IMR-90 (cell line): ENCODE measurements at regions of chr18 and their contacts with region 1.

Region 1: GRCh38 chr18:13530879-13531387 is 195.4 kb downstream of the FAM210A start:
- DNase-seq: peak; percentile 8
- ATAC-seq: peak; percentile 86
- H3K4me3 ChIP-seq: no peak overlapping the region
- H3K27ac ChIP-seq: no peak overlapping the region
- H3K4me1 ChIP-seq: no peaks in the 10 kb centered on the region
- H3K27me3 ChIP-seq: peaks cover 5% of the 10 kb centered on the region; the same call in 1 of the 2 replicates
- CTCF ChIP-seq: peak; percentile 42
- POLR2A ChIP-seq: no peak
- RAD21 ChIP-seq: peak; percentile 47

Region 2: DNA sequence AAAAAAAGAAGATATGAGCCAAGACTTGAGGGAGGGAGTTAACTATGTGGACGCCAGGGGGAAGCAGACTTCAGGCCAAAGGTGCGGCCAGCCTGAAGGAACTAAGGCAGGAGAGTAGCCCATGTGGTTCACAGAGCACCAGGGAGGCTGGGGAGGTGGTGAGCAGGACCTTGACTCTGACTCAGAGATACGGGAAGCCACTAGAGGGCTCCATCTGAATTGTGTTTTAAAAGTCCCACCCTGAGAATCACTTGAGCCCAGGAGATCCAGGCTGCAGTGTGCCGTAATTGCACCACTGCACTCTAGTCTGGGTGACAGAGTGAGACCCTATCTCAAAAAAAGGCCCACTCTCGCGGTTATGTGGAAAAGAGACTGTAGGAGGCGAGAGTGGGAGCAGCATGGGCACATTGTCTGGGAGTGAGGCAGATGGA is 527.5 kb before region 1 on chr18:
- CTCF ChIA-PET with region 1: no interaction called
- POLR2A ChIA-PET with region 1: no interaction called
- dilution Hi-C with region 1: no loop called
- in situ Hi-C with region 1: no loop called
- intact Hi-C with region 1: loop called (anchors 10 kb)
- DNase-seq: peak; percentile 80
- ATAC-seq: peak; percentile 98
- H3K4me3 ChIP-seq: no peak overlapping the region
- H3K27ac ChIP-seq: no peak overlapping the region
- H3K4me1 ChIP-seq: no peaks in the 10 kb centered on the region
- H3K27me3 ChIP-seq: no peaks in the 10 kb centered on the region
- CTCF ChIP-seq: peak; percentile 55
- POLR2A ChIP-seq: no peak
- RAD21 ChIP-seq: peak; percentile 47

Region 3: GRCh38 chr18:13216092-13216582 is 314.8 kb before region 1 on chr18:
- CTCF ChIA-PET with region 1: interaction called, 3 read pairs
- POLR2A ChIA-PET with region 1: no interaction called
- dilution Hi-C with region 1: no loop called
- in situ Hi-C with region 1: no loop called
- intact Hi-C with region 1: loop called (anchors 1 kb)
- DNase-seq: peak; percentile 47
- ATAC-seq: peak; percentile 74
- H3K4me3 ChIP-seq: no peak overlapping the region
- H3K27ac ChIP-seq: no peak overlapping the region
- H3K4me1 ChIP-seq: no peaks in the 10 kb centered on the region; the same call in 1 of the 2 replicates
- H3K27me3 ChIP-seq: peaks cover 67% of the 10 kb centered on the region
- CTCF ChIP-seq: peak; percentile 45; the same call in 1 of the 2 replicates
- POLR2A ChIP-seq: no peak
- RAD21 ChIP-seq: peak; percentile 54